GM18951 (cell line): ENCODE measurements at regions of chr12 and their contacts with region 1.

Region 1: DNA sequence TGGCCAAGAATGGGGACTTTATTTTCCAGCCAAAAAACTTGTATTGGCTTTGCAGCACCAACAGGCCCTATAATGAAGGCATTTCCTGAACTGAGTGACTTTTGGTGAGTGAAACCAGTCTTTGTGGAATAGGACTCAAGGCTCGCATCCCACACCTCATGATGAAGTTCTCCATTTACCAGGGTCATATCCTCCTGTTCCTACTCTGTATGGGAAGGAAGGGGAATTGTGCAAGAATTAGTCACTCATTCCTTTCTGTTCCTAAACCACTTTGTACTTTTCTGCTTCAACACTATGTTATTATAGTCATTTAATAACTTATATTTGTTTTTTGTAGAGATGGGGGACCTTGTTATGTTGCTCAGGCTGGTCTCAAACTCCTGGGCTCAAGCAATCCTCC is 2.3 kb upstream of the SPATS2 start:
- POLR2A ChIP-seq: no peak

Region 2: DNA sequence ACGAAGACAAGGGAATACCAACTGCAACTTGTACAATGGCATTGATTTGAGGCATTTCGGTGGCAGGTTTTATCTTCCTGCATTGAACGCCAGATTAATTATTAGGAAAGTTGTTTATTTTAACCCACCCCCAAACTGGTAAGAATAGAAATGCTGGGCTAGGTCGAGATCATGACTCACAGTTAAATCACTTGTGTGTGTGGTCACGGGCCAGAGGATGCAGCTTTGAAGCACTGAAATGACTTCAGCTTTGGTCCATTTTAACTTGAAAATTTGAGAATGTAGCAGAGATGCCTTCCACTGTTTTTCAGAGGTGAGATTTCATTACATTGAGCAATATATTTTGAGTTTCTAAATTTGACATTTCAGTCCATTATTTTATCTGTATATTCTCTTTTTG is 150.3 kb after region 1 on chr12:
- in situ Hi-C with region 1: loop called (anchors 5 kb)
- POLR2A ChIP-seq: no peak

Region 3: GRCh38 chr12:49609746-49610089 is 244.7 kb after region 1 on chr12:
- in situ Hi-C with region 1: no loop called
- POLR2A ChIP-seq: no peak